ENCODE measurements at regions of chr12 and their contacts with region 1.

Region 1: DNA sequence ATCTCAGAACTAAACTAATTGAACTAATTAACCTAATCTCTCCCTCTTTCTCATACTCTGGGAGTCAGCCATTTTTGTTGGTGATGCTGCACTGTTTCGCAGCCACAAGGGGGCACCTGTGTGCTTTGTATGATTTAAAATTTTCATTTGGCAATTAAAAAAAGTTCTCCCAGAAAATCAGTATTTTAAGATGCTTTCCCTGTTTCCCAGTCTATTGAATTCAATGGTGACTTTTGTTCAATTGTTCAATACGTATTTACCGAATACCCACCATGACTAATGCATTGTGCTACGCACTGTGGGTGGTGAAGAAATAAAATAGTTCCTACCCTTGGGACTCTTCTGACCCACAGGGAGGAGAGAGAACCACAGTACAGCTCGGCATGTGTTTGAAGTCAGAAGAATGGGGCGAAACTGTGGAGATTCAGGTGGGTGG is 63.7 kb downstream of the ZNF664 start:
- DNase-seq: peak in 2 of 3 donors; percentile 52 to 68
- H3K4me3 ChIP-seq: no peak overlapping the region
- H3K27ac ChIP-seq: no peak overlapping the region
- H3K4me1 ChIP-seq: peaks cover 4 to 20% (median 9%) of the 10 kb centered on the region in 4 experiments
- H3K27me3 ChIP-seq: no peaks in the 10 kb centered on the region

Region 2: DNA sequence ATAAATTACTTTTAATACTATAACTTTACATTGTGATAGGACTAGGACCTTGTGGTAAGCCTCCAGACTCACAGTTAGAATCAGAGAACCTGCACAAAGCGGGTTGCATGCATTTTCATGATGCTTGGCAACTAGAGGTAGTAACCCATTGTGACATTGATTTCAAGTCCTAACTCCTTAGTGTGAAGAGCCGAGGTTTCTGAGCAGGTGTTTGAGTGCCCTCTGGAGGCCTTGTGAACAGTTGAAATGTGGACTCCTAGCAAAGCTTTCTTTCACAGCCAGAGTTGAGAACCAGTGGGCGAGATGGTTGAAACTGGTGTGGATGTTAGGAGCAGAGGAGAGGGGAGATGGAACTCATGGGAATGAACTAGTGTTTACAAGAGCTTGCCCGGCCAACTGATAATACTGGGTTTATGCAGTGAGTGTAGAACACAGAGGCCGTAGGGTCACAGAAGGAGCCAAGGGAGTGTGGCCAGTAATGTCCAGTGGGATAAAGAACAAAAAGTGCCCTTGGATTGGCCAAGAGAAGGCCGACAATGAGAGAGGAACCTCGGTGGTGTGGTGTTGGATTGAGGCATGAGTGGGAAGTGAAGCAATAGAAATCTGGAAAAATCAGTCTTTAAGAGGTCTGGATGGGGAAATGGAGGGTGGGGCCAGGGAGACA is 52.7 kb before region 1 on chr12:
- CTCF ChIA-PET with region 1: interaction called, 14 read pairs
- POLR2A ChIA-PET with region 1: no interaction called
- DNase-seq: peak; percentile 68 to 87 (median 84)
- H3K4me3 ChIP-seq: no peak overlapping the region
- H3K27ac ChIP-seq: no peak overlapping the region
- H3K4me1 ChIP-seq: no peaks in the 10 kb centered on the region
- H3K27me3 ChIP-seq: no peaks in the 10 kb centered on the region

Region 3: DNA sequence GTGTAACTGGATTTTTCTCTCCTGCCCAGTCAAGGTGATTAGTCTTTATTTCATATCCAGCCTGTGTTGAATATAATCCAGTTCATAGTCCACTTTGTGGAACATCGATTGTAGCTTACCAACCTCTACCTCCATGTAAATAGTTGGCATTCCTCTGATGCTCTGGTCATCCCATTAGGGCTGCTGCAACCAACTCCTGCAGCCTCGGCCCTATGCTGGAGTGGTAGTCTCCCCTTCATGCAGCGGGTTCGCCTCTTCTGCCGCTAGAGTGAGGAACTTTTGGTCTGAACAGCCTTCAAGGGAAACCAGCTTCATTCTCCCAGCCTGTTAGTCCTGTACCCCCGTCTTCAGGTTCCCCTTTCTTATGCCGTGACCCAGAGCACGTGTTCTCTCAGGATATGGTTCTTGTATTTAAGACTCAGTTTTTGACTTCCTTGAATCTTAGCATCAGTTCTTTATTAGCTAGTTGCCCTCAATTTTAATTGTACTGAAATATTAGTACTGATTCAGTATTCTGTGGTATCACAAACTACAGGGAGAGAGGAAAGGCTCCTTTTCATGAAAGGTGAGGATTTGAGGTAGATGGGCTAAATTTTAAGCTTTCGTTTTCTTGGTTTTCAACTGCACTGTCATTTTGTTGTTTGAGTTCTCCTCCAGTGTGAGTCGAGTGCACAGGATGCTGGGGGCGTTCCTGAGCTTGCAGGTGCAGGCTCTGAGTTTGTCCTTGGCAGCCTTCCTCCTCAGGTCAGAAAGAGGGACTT is 30.4 kb before region 1 on chr12:
- CTCF ChIA-PET with region 1: interaction called, 19 read pairs
- POLR2A ChIA-PET with region 1: interaction called, 5 read pairs
- DNase-seq: peak; percentile 55 to 88 (median 84)
- H3K4me3 ChIP-seq: peak overlapping the region in 4 of 7 experiments; percentile 18 to 46 (median 28)
- H3K27ac ChIP-seq: peak overlapping the region; percentile 26 to 70
- H3K4me1 ChIP-seq: peaks cover 8 to 32% (median 29%) of the 10 kb centered on the region in 4 experiments
- H3K27me3 ChIP-seq: no peaks in the 10 kb centered on the region

Region 4: DNA sequence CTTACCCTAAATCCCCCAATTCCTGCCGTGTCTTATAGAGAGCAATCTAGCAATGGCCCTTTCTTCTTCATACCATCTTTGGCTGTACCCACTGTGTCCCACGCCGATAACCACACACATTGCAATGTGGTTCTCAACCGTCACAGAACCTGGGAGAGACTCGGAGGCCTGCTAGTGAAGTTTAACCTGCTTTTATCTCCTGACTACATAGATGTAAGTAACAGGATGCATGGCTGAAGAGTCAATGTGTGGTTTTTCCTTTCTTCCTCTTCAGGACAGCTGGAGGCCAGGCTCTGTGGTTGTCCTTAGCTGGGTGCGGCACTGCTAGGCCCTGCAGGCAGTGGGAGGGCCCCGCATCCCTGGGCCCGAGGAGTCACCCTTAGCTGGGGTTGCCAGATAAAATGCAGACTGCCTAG is 12.4 kb before region 1 on chr12:
- CTCF ChIA-PET with region 1: interaction called, 14 read pairs
- POLR2A ChIA-PET with region 1: no interaction called
- DNase-seq: peak; percentile 78 to 98 (median 95)
- H3K4me3 ChIP-seq: peak overlapping the region in 1 of 7 experiments; percentile 43
- H3K27ac ChIP-seq: peak overlapping the region in 1 of 2 experiments; percentile 81
- H3K4me1 ChIP-seq: peaks cover 3 to 40% (median 31%) of the 10 kb centered on the region in 4 experiments
- H3K27me3 ChIP-seq: no peaks in the 10 kb centered on the region

Region 5: GRCh38 chr12:124053851-124054250 is 17.2 kb after region 1 on chr12:
- CTCF ChIA-PET with region 1: interaction called, 11 read pairs
- POLR2A ChIA-PET with region 1: interaction called, 3 read pairs
- DNase-seq: peak; percentile 43 to 68 (median 66)
- H3K4me3 ChIP-seq: no peak overlapping the region
- H3K27ac ChIP-seq: no peak overlapping the region
- H3K4me1 ChIP-seq: peaks cover 0 to 12% (median 5%) of the 10 kb centered on the region in 4 experiments
- H3K27me3 ChIP-seq: no peaks in the 10 kb centered on the region

Region 6: DNA sequence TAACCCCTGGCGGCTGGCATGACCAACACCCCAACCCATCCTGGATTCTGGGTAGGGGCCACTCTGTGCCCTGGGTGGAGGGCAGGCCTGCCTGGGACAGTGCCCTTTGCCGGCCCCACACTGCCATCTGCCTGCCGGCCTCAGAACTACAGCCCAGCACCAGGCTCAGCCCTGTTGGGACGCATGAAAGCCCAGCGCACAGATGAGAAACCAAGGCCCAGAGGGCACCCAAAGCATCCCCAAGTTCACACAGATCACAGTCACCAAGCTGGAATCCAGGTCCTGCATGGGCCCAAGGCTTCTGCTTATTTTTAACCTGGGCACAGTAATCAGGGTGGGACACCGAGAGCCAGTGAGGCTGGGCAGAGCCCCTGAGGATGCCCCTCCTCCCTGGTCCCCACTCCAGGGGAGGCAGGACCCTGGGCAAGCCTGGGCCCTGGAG is 284.4 kb after region 1 on chr12:
- CTCF ChIA-PET with region 1: interaction called, 32 read pairs
- POLR2A ChIA-PET with region 1: no interaction called
- DNase-seq: peak; percentile 20 to 55 (median 49)
- H3K4me3 ChIP-seq: no peak overlapping the region
- H3K27ac ChIP-seq: no peak overlapping the region
- H3K4me1 ChIP-seq: no peaks in the 10 kb centered on the region
- H3K27me3 ChIP-seq: peaks cover 0 to 3% (median 0%) of the 10 kb centered on the region in 5 experiments

Region 7: DNA sequence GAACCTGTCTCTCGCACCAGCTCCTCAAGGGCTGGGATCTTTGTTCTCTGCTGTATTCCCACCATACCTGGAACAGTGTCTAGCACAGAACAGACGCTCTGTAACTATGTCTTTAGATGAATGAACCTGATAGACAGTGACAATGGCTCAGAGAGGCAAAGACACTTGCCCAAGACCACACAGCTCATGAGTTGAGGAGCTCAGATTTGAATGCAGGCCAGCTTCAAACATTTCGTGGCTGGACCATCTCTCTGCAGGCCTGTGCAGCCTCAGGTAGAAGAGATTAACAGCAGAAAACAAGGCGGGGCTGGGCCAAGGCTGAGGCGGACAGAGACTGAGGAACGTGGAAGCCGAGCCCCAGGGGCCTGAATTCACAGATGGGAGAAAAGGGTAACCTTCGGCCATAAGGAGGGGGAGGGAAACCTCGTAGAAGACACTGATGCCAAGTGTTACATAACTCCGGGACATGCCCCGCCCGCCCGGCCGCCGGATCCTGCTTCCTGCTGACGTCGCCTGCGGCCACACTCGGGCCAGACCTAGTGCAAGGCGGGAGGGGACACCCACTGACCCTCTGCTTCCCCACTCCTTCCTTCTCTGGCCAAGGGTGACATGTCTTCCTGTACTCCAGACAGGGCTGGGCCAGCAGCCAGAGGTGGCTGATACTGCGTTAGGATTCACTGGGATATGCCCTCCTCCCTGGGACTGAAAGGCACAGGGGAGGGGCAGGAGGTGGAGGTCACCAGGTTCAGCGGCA is 344.9 kb after region 1 on chr12:
- CTCF ChIA-PET with region 1: no interaction called
- POLR2A ChIA-PET with region 1: no interaction called
- DNase-seq: no peak
- H3K4me3 ChIP-seq: no peak overlapping the region
- H3K27ac ChIP-seq: no peak overlapping the region
- H3K4me1 ChIP-seq: peaks cover 0 to 34% (median 24%) of the 10 kb centered on the region in 4 experiments
- H3K27me3 ChIP-seq: no peaks in the 10 kb centered on the region

Region 8: GRCh38 chr12:124767066-124767821 is 730.6 kb after region 1 on chr12:
- CTCF ChIA-PET with region 1: interaction called, 19 read pairs
- POLR2A ChIA-PET with region 1: no interaction called
- DNase-seq: peak; percentile 73 to 87 (median 86)
- H3K4me3 ChIP-seq: no peak overlapping the region
- H3K27ac ChIP-seq: no peak overlapping the region
- H3K4me1 ChIP-seq: peaks cover 0 to 13% (median 4%) of the 10 kb centered on the region in 4 experiments
- H3K27me3 ChIP-seq: peaks cover 0 to under 1% (median 0%) of the 10 kb centered on the region in 5 experiments

Measured in common myeloid progenitor, CD34-positive (primary cell).